Activated CD8-positive, alpha-beta memory T cell treated with anti-CD3 and anti-CD28 coated beads, Interleukin-2, amount 10 ng/mL, durations not matched to agents 7 days and 5 days (primary cell): ENCODE measurements at regions of chr22 and their contacts with region 1.

Region 1: DNA sequence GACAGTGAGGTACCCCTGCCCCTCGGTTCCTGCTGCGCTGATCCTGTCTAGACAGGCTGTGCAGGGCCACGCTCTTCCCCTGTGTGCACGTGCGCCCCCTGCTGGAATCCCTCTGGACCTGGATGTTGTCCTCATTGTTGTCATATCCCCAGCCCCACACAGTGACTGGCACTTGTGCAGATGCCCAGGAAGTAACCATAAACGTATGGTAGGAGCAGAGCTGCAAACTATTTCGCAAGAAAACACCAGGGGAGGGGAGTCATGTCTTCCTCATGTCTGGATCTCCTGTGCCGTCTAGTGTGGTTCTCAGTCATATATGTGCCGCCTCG is 114.7 kb downstream of the CRYBB2 start:
- DNase-seq: peak; percentile 78
- ATAC-seq: peak; percentile 77
- H3K4me3 Mint-ChIP-seq: no peak overlapping the region
- H3K27ac Mint-ChIP-seq: no peak overlapping the region
- H3K4me1 Mint-ChIP-seq: peaks cover 4% of the 10 kb centered on the region
- H3K27me3 Mint-ChIP-seq: peaks cover 4% of the 10 kb centered on the region

Region 2: GRCh38 chr22:25202290-25202921 is 131.7 kb before region 1 on chr22:
- CTCF ChIA-PET with region 1: interaction called, 11 read pairs
- DNase-seq: peak; percentile 70
- ATAC-seq: peak; percentile 57
- H3K4me3 Mint-ChIP-seq: no peak overlapping the region
- H3K27ac Mint-ChIP-seq: no peak overlapping the region
- H3K4me1 Mint-ChIP-seq: peaks cover 16% of the 10 kb centered on the region
- H3K27me3 Mint-ChIP-seq: no peaks in the 10 kb centered on the region